Caco-2 (cell line): ENCODE measurements at regions of chr11 and their contacts with region 1.

Region 1: DNA sequence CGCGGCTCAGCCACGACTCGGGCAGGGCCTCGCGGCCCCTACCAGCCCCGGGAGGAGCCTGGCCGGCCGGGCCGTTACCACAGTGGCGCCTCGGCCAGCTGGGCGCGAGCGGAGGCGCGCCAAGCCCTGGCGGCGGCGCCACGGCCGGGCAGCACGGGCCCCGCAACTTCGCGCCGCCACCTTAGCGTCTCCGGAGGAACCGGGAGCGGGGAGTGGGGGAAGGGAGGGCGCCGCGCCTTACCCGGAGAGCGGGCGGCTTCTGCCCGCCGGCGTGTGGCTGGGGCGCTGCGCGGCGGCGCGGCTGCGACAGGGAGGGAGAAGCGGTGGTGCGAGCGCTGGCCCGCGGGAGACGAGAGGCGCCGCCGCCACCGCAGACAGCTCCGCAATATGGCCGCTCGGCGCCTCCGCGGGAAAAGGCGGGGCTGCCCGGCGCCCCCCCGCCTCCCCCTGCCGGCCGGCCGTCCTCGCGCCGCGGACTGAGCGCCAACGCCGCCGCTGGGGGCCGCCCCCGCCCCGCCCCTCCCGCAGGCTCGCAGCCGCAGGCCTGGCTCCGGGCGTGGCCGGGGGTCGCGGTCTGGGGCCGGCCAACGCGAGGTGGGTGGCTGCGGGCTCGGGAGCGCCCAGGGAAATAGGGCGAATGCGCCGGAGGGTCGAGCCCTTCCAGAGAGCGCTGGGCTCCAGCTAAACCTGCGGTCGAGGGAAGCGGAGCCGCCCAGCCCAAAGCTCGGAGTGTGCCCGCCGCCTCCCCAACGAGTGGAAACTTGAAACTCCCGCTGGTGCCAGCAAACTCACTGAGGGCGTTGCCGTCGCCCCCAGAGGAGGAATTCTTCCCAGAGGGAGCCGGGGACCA is at the start of gene RDX:
- DNase-seq: peak; percentile 88 to 91
- H3K4me3 ChIP-seq: peak within 1 kb of the TSS; percentile 98
- H3K4me3 Mint-ChIP-seq: peak within 1 kb of the TSS; percentile 91
- H3K27ac Mint-ChIP-seq: peak within 1 kb of the TSS; percentile 98
- H3K4me1 ChIP-seq: peaks cover 51% of the 10 kb centered on the region
- H3K4me1 Mint-ChIP-seq: peaks cover 62% of the 10 kb centered on the region
- H3K27me3 ChIP-seq: no peaks in the 10 kb centered on the region
- H3K27me3 Mint-ChIP-seq: no peaks in the 10 kb centered on the region
- CTCF ChIP-seq: peak in 1 of 2 experiments; percentile 24
- total RNA-seq, gene RDX: 250 and 251 TPM in 2 replicates

Region 2: GRCh38 chr11:110092515-110093404 is 203.7 kb before region 1 on chr11 and contains the start of gene ZC3H12C:
- CTCF ChIA-PET with region 1: no interaction called
- POLR2A ChIA-PET with region 1: interaction called, 6 read pairs
- intact Hi-C with region 1: loop called (anchors 10 kb)
- DNase-seq: peak; percentile 97
- H3K4me3 ChIP-seq: peak within 1 kb of the TSS; percentile 79
- H3K4me3 Mint-ChIP-seq: peak within 1 kb of the TSS; percentile 95
- H3K27ac Mint-ChIP-seq: peak within 1 kb of the TSS; percentile 94
- H3K4me1 ChIP-seq: peaks cover 17% of the 10 kb centered on the region
- H3K4me1 Mint-ChIP-seq: peaks cover 6% of the 10 kb centered on the region
- H3K27me3 ChIP-seq: 0 out of 2 replicates have a peak, but pooled peaks cover 1% of the 10 kb centered on the region
- H3K27me3 Mint-ChIP-seq: no peaks in the 10 kb centered on the region
- CTCF ChIP-seq: peak in 1 of 2 experiments; percentile 73
- total RNA-seq, gene ZC3H12C: 11.4 and 11.7 TPM in 2 replicates

Region 3: GRCh38 chr11:110317516-110317932 is 21.1 kb after region 1 on chr11:
- CTCF ChIA-PET with region 1: interaction called, 3 read pairs
- POLR2A ChIA-PET with region 1: no interaction called
- intact Hi-C with region 1: loop called (anchors 2 kb)
- DNase-seq: no peak
- H3K4me3 ChIP-seq: no peak overlapping the region
- H3K4me3 Mint-ChIP-seq: no peak overlapping the region
- H3K27ac Mint-ChIP-seq: no peak overlapping the region
- H3K4me1 ChIP-seq: peaks cover 32% of the 10 kb centered on the region
- H3K4me1 Mint-ChIP-seq: peaks cover 31% of the 10 kb centered on the region
- H3K27me3 ChIP-seq: no peaks in the 10 kb centered on the region
- H3K27me3 Mint-ChIP-seq: no peaks in the 10 kb centered on the region
- CTCF ChIP-seq: no peak

Region 4: GRCh38 chr11:110337570-110338193 is 41.2 kb after region 1 on chr11:
- CTCF ChIA-PET with region 1: no interaction called
- POLR2A ChIA-PET with region 1: interaction called, 4 read pairs
- intact Hi-C with region 1: loop called (anchors 1 kb)
- DNase-seq: peak; percentile 93 to 94
- H3K4me3 ChIP-seq: no peak overlapping the region
- H3K4me3 Mint-ChIP-seq: peak overlapping the region; percentile 29
- H3K27ac Mint-ChIP-seq: peak overlapping the region; percentile 95
- H3K4me1 ChIP-seq: peaks cover 35% of the 10 kb centered on the region
- H3K4me1 Mint-ChIP-seq: peaks cover 27% of the 10 kb centered on the region
- H3K27me3 ChIP-seq: no peaks in the 10 kb centered on the region
- H3K27me3 Mint-ChIP-seq: no peaks in the 10 kb centered on the region
- CTCF ChIP-seq: no peak

Region 5: GRCh38 chr11:110356756-110357671 is 60.6 kb after region 1 on chr11:
- CTCF ChIA-PET with region 1: interaction called, 3 read pairs
- POLR2A ChIA-PET with region 1: interaction called, 3 read pairs
- intact Hi-C with region 1: loop called (anchors 1 kb)
- DNase-seq: peak; percentile 77 to 86
- H3K4me3 ChIP-seq: no peak overlapping the region
- H3K4me3 Mint-ChIP-seq: peak overlapping the region; percentile 29
- H3K27ac Mint-ChIP-seq: peak overlapping the region; percentile 73
- H3K4me1 ChIP-seq: peaks cover 38% of the 10 kb centered on the region
- H3K4me1 Mint-ChIP-seq: peaks cover 43% of the 10 kb centered on the region
- H3K27me3 ChIP-seq: no peaks in the 10 kb centered on the region
- H3K27me3 Mint-ChIP-seq: no peaks in the 10 kb centered on the region
- CTCF ChIP-seq: no peak

Region 6: GRCh38 chr11:110362971-110363509 is 66.6 kb after region 1 on chr11:
- CTCF ChIA-PET with region 1: interaction called, 3 read pairs
- POLR2A ChIA-PET with region 1: interaction called, 3 read pairs
- intact Hi-C with region 1: loop called (anchors 1 kb)
- DNase-seq: peak; percentile 78 to 87
- H3K4me3 ChIP-seq: no peak overlapping the region
- H3K4me3 Mint-ChIP-seq: peak overlapping the region; percentile 61
- H3K27ac Mint-ChIP-seq: peak overlapping the region; percentile 91
- H3K4me1 ChIP-seq: peaks cover 38% of the 10 kb centered on the region
- H3K4me1 Mint-ChIP-seq: peaks cover 58% of the 10 kb centered on the region
- H3K27me3 ChIP-seq: no peaks in the 10 kb centered on the region
- H3K27me3 Mint-ChIP-seq: no peaks in the 10 kb centered on the region
- CTCF ChIP-seq: no peak

Region 7: GRCh38 chr11:110738641-110739040 is 442.2 kb after region 1 on chr11:
- CTCF ChIA-PET with region 1: no interaction called
- POLR2A ChIA-PET with region 1: no interaction called
- intact Hi-C with region 1: no loop called
- DNase-seq: peak in 1 of 2 experiments; percentile 14
- H3K4me3 ChIP-seq: no peak overlapping the region
- H3K4me3 Mint-ChIP-seq: no peak overlapping the region
- H3K27ac Mint-ChIP-seq: no peak overlapping the region
- H3K4me1 ChIP-seq: no peaks in the 10 kb centered on the region
- H3K4me1 Mint-ChIP-seq: no peaks in the 10 kb centered on the region
- H3K27me3 ChIP-seq: no peaks in the 10 kb centered on the region
- H3K27me3 Mint-ChIP-seq: peaks cover 14% of the 10 kb centered on the region
- CTCF ChIP-seq: peak in 1 of 2 experiments; percentile 14